Kidney (tissue), 22 donors: ENCODE measurements at regions of chr2 and their contacts with region 1.

Region 1: GRCh38 chr2:47906157-47907038 is at the start of gene FBXO11:
- DNase-seq: peak; percentile 97 to 99 (median 98)
- H3K4me3 ChIP-seq: peak within 1 kb of the TSS; percentile 72 to 94 (median 87)
- H3K27ac ChIP-seq: peak within 1 kb of the TSS; percentile 97 to 99
- H3K4me1 ChIP-seq: no peaks in the 10 kb centered on the region
- H3K27me3 ChIP-seq: no peaks in the 10 kb centered on the region
- CTCF ChIP-seq: peak; percentile 58
- total RNA-seq, gene FBXO11: 68.7 TPM

Region 2: GRCh38 chr2:47850198-47850597 is 56.2 kb before region 1 on chr2:
- intact Hi-C with region 1: loop called (anchors 10 kb)
- DNase-seq: no peak
- H3K4me3 ChIP-seq: no peak overlapping the region
- H3K27ac ChIP-seq: no peak overlapping the region
- H3K4me1 ChIP-seq: peaks cover 0 to 4% (median 0%) of the 10 kb centered on the region in 3 donors
- H3K27me3 ChIP-seq: no peaks in the 10 kb centered on the region
- CTCF ChIP-seq: no peak